A673 (cell line): ENCODE measurements at regions of chr10 and their contacts with region 1.

Region 1: DNA sequence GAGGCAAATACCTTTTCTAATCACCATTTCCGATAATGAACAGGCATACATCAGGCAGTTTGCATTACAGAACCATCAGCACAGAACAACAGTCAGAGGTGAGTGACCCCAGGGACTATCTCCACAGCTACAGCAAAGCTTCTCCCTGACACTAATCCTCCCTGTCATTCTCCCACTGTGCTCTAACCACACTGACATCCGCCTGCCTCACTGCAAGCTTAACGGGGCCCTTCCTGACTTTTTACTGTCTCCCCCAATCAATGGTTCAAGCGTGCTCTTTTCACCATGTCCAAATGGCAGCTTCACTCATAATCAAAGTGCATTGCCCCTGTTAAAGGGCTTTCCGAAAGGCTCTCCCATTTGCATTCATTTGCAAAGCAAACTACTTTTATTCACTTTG is 196.3 kb downstream of the DNAJC1 start:
- DNase-seq: peak; percentile 51
- H3K4me3 ChIP-seq: no peak overlapping the region
- H3K27ac ChIP-seq: no peak overlapping the region
- H3K4me1 ChIP-seq: peaks cover 8% of the 10 kb centered on the region
- H3K27me3 ChIP-seq: no peaks in the 10 kb centered on the region
- CTCF ChIP-seq: no peak

Region 2: GRCh38 chr10:21732067-21732772 is 75.0 kb before region 1 on chr10:
- CTCF ChIA-PET with region 1: no interaction called
- POLR2A ChIA-PET with region 1: no interaction called
- intact Hi-C with region 1: no loop called
- DNase-seq: peak; percentile 88
- H3K4me3 ChIP-seq: no peak overlapping the region
- H3K27ac ChIP-seq: no peak overlapping the region
- H3K4me1 ChIP-seq: peaks cover 73% of the 10 kb centered on the region
- H3K27me3 ChIP-seq: no peaks in the 10 kb centered on the region
- CTCF ChIP-seq: peak; percentile 94

Region 3: DNA sequence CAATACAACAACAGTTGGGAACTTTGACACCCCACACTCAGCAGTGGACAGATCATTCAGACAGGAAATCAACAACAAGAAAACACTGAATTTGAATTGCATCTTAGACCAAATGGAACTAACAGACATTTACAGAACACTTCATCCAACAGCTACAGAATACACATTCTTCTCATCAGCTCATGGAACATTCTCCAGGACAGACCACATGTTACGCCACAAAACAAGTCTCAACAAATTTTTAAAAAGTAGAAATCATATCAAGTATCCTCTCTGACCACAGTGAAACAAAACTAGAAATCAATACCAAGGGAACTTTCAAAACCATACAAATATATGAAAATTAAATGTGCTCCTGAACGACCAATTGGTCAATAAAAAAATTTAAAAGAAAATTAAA is 15.9 kb before region 1 on chr10:
- CTCF ChIA-PET with region 1: no interaction called
- POLR2A ChIA-PET with region 1: interaction called, 11 read pairs
- intact Hi-C with region 1: no loop called
- DNase-seq: no peak
- H3K4me3 ChIP-seq: no peak overlapping the region
- H3K27ac ChIP-seq: no peak overlapping the region
- H3K4me1 ChIP-seq: no peaks in the 10 kb centered on the region
- H3K27me3 ChIP-seq: no peaks in the 10 kb centered on the region
- CTCF ChIP-seq: no peak

Region 4: GRCh38 chr10:22443175-22443901 is 636.2 kb after region 1 on chr10:
- CTCF ChIA-PET with region 1: no interaction called
- POLR2A ChIA-PET with region 1: no interaction called
- intact Hi-C with region 1: no loop called
- DNase-seq: no peak
- H3K4me3 ChIP-seq: no peak overlapping the region
- H3K27ac ChIP-seq: no peak overlapping the region
- H3K4me1 ChIP-seq: peaks cover 5% of the 10 kb centered on the region
- H3K27me3 ChIP-seq: no peaks in the 10 kb centered on the region
- CTCF ChIP-seq: no peak